ENCODE measurements at regions of chr18 and their contacts with region 1.

Region 1: GRCh38 chr18:70421471-70422390 is 132.9 kb downstream of the SOCS6 start:
- DNase-seq: peak; percentile 72 to 82
- ATAC-seq: peak; percentile 77 to 96 (median 89)
- H3K4me3 ChIP-seq: no peak overlapping the region
- H3K27ac ChIP-seq: peak overlapping the region; percentile 18
- H3K4me1 ChIP-seq: peaks cover 7% of the 10 kb centered on the region
- H3K27me3 ChIP-seq: no peaks in the 10 kb centered on the region
- CTCF ChIP-seq: no peak

Region 2: DNA sequence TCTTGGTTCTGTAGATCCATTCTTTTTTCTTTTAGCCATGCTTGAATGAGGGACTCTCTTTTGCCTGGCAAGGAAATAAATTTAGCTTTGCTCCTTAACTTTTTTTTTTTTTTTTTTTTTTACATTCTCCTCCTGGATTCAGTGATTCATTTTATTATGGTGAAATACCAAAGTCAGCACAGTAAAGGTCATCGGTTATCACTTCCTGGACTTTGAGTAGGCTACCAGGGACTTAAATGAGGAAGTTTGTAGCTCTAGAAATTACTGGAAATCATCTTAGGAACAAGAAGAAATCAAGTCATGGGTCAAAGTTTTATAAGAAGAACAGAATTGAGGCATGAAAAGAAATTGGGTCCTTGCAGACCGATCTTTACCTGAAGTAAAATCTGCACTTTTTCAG is 57.9 kb before region 1 on chr18:
- intact Hi-C with region 1: loop called in 1 of 2 experiments (anchors 10 kb)
- DNase-seq: no peak
- ATAC-seq: no peak
- H3K4me3 ChIP-seq: no peak overlapping the region
- H3K27ac ChIP-seq: no peak overlapping the region
- H3K4me1 ChIP-seq: no peaks in the 10 kb centered on the region
- H3K27me3 ChIP-seq: no peaks in the 10 kb centered on the region
- CTCF ChIP-seq: no peak